ENCODE measurements at regions of chr1 and their contacts with region 1.

Region 1: DNA sequence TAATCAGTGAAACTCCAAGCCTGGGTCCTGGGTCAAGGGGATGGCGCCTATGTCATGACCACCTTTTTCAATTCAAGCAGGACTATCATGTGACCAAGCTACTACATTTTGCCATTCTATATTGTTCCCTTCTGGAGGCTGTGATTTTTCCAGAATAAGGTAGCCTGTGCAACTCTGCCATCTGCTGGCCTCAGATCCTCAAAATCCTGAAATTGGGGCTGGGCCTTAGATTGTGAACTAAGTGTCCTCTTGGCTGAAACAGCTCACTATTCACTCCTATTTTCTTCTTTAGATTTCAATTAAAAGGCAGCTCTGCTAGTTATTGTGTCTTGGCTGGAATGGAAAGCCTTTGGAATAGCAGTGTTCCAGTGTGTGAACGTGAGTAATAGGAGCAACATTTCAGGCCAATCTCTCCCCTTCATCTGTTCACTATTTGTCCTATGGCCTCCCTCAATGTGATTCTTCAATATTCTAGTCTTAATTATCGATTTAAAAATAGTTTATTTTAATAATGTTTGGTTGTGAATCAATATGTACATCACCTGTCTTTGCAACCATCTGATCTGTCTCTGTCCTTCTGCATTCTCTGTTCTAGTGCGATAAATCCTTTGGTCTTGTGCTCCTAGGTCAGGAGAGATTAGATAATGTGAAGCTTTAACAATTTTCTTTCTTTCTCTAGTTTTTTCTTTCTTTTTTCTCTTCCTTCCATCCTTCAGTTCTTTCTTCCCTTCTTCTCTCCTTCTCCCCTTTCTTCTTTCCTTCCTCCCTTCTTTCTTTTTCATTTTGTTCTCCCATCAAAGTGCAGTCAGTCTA is 69.8 kb downstream of the CR1 start:
- DNase-seq: peak; percentile 38
- ATAC-seq: peak; percentile 94
- H3K4me3 Mint-ChIP-seq: no peak overlapping the region
- H3K27ac Mint-ChIP-seq: no peak overlapping the region
- H3K4me1 Mint-ChIP-seq: 0 out of 2 replicates have a peak, but pooled peaks cover 3% of the 10 kb centered on the region
- H3K27me3 Mint-ChIP-seq: no peaks in the 10 kb centered on the region
- CTCF ChIP-seq: no peak

Region 2: DNA sequence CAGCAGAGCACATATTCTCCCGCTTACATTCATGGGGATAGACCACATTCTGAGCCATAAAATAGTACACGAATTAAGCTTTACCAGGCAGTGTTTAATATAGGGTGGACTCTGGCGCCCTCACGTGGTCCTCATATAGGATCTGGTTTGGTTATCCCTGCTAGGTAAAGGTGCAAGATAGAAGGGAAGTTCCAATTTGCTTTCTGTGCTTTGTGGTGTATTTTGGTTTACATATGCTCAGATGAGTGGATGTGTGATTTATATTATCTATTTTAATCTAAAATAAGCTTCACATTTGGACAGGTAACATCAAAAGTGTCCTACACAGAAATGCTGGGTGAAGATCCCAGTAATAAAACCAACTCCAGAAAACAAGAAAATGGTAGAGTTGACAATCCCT is 66.2 kb before region 1 on chr1:
- CTCF ChIA-PET with region 1: interaction called, 10 read pairs
- POLR2A ChIA-PET with region 1: no interaction called
- DNase-seq: peak; percentile 64
- ATAC-seq: peak; percentile 69
- H3K4me3 Mint-ChIP-seq: no peak overlapping the region
- H3K27ac Mint-ChIP-seq: no peak overlapping the region
- H3K4me1 Mint-ChIP-seq: peaks cover 11% of the 10 kb centered on the region
- H3K27me3 Mint-ChIP-seq: peaks cover 29% of the 10 kb centered on the region
- CTCF ChIP-seq: peak; percentile 60

Measured in WTC11 (cell line).